H1 (cell line): ENCODE measurements at regions of chr9 and their contacts with region 1.

Region 1: GRCh38 chr9:114405294-114406034 is 17.7 kb upstream of the AKNA start:
- DNase-seq: peak in 1 of 2 experiments; percentile 82
- H3K4me3 ChIP-seq: no peak overlapping the region
- H3K27ac ChIP-seq: no peak overlapping the region
- H3K4me1 ChIP-seq: peaks cover 0 to 12% (median 6%) of the 10 kb centered on the region in 4 experiments; a peak in 5 of 7 replicates
- H3K27me3 ChIP-seq: no peaks in the 10 kb centered on the region
- CTCF ChIP-seq: peak; percentile 77 to 93 (median 86)
- EP300 ChIP-seq: no peak
- POLR2A ChIP-seq: no peak
- RAD21 ChIP-seq: peak; percentile 97

Region 2: DNA sequence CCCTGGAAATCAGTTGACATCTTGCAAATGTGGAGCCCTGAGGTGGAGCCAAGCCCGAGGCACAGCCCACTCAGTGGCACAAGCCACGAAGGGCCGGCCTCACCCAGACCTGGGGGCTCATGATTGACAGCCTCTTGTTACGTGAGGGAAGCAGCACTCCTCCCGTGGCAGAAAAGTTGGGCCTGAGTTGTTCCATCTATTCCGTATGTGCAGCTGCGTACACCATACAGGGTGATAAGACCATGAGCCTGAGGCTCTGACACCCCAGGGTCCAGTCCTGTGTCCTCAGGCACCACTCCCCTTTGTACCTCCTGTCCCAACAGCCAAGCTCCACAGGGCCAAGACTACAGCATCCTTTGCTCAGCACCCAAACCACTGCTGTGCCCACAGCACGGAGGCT is 77.7 kb before region 1 on chr9:
- CTCF ChIA-PET with region 1: no interaction called
- POLR2A ChIA-PET with region 1: no interaction called
- DNase-seq: no peak
- H3K4me3 ChIP-seq: no peak overlapping the region
- H3K27ac ChIP-seq: no peak overlapping the region
- H3K4me1 ChIP-seq: 0 out of 7 replicates have a peak, but pooled peaks cover 0 to 2% (median 0%) of the 10 kb centered on the region in 4 experiments
- H3K27me3 ChIP-seq: no peaks in the 10 kb centered on the region
- CTCF ChIP-seq: no peak
- EP300 ChIP-seq: no peak
- POLR2A ChIP-seq: no peak
- RAD21 ChIP-seq: no peak

Region 3: DNA sequence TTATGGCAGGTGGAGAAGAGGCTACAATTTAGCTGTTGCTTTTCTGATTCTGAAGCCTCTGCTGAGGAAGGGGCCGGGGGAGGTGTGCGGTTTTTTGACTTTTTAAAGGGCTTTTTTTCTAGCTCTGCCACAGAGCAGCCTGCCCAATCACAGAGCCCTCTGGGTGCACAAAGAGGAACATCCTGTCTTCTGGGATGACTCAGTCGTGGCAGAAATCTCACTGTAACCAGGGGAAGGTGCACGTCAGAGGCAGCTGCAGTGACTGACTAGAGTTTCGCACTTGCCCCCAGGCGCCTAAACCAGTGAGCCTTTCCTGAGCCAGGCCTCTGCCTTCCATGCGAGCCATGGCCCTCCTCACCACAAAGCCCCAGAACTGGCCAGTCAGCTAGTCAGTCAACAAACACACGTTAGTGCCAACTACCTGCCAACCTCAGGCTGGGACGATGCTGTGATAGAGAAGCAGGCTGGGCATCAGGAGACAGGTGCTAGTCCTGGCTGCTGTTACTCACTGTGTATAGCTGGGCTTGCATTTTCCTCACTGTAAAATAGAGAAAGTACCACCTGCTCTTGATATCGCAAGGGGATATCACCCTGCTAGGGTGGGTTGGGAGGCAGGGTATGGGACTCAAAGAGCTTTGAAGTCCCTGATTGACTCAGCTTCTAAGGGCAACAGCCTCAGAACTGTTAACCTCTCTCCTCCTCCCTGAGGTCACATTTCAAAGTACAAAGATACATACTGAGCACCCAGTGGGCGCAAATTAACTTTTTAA is 19.9 kb before region 1 on chr9:
- CTCF ChIA-PET with region 1: interaction called, 20 read pairs
- POLR2A ChIA-PET with region 1: interaction called, 4 read pairs
- DNase-seq: no peak
- H3K4me3 ChIP-seq: no peak overlapping the region
- H3K27ac ChIP-seq: no peak overlapping the region; the same call in 1 of the 2 replicates
- H3K4me1 ChIP-seq: peaks cover 19 to 55% (median 39%) of the 10 kb centered on the region in 4 experiments
- H3K27me3 ChIP-seq: no peaks in the 10 kb centered on the region; a peak in 1 of 7 replicates
- CTCF ChIP-seq: no peak
- EP300 ChIP-seq: no peak
- POLR2A ChIP-seq: no peak
- RAD21 ChIP-seq: no peak

Region 4: DNA sequence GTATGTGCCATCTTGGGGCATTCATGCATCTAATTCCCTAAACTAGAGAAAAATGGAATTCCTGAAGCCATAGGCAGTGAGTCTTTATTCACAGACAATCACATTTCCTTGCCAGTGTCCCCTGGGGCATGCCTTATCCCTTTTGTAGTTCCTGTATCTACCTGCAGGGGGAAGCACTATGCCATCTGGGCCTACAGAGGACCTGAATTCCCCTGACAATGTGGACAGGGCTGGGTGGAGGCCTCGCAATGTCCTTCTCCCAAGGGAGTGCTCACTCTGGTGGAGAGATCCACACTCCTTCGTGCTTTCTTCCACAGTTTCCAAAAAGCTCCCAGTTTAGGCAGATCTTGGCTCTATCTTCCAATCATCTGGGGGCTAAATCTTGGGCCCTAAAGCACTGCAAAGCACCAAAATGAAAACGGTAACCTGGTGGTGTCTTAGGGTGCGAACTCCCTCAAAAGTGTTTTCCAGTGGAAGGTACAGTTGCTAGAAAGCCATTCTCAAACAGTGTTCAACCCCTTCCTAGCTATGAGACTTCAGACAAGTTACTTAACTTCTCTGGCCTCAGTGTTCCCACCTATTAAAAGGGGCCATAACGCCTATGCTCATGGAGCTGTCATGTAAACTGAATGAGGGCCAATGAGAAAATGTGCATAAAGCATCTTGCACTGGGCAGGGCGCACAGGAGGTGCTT is 82.3 kb after region 1 on chr9:
- CTCF ChIA-PET with region 1: interaction called, 10 read pairs
- POLR2A ChIA-PET with region 1: no interaction called
- DNase-seq: peak in 1 of 2 experiments; percentile 78
- H3K4me3 ChIP-seq: no peak overlapping the region
- H3K27ac ChIP-seq: no peak overlapping the region
- H3K4me1 ChIP-seq: peaks cover 0 to 3% (median 0%) of the 10 kb centered on the region in 4 experiments; a peak in 3 of 7 replicates
- H3K27me3 ChIP-seq: no peaks in the 10 kb centered on the region
- CTCF ChIP-seq: peak; percentile 70 to 86 (median 81)
- EP300 ChIP-seq: no peak
- POLR2A ChIP-seq: no peak
- RAD21 ChIP-seq: peak; percentile 83 to 86

Region 5: GRCh38 chr9:114587385-114588202 is 182.1 kb after region 1 on chr9 and contains the start of gene ATP6V1G1:
- CTCF ChIA-PET with region 1: interaction called, 12 read pairs
- POLR2A ChIA-PET with region 1: interaction called, 3 read pairs
- DNase-seq: peak; percentile 96 to 97
- H3K4me3 ChIP-seq: peak within 1 kb of the TSS; percentile 75 to 97 (median 89)
- H3K27ac ChIP-seq: peak within 1 kb of the TSS; percentile 82
- H3K4me1 ChIP-seq: peaks cover 6 to 16% (median 7%) of the 10 kb centered on the region in 4 experiments
- H3K27me3 ChIP-seq: no peaks in the 10 kb centered on the region
- CTCF ChIP-seq: no peak
- EP300 ChIP-seq: peak; percentile 5 to 46; a peak in 2 of 3 replicates
- POLR2A ChIP-seq: peak; percentile 84 to 90
- RAD21 ChIP-seq: peak in 1 of 2 experiments; percentile 10; a peak in 1 of 4 replicates
- total RNA-seq, gene ATP6V1G1: 112 and 114 TPM in 2 replicates

Region 6: GRCh38 chr9:114681594-114682332 is 276.3 kb after region 1 on chr9 and contains the start of gene TEX48:
- CTCF ChIA-PET with region 1: interaction called, 23 read pairs
- POLR2A ChIA-PET with region 1: no interaction called
- DNase-seq: peak; percentile 43 to 84
- H3K4me3 ChIP-seq: no peak within 1 kb of the TSS
- H3K27ac ChIP-seq: no peak within 1 kb of the TSS
- H3K4me1 ChIP-seq: no peaks in the 10 kb centered on the region
- H3K27me3 ChIP-seq: no peaks in the 10 kb centered on the region; a peak in 2 of 7 replicates
- CTCF ChIP-seq: peak; percentile 86 to 91 (median 90)
- EP300 ChIP-seq: no peak
- POLR2A ChIP-seq: no peak
- RAD21 ChIP-seq: peak; percentile 85 to 94
- total RNA-seq, gene TEX48: not detected in 2 replicates